Activated T-helper 1 cell treated with anti-CD3 and anti-CD28 coated beads, Interleukin-12 subunit alpha, Interleukin-12 subunit beta, Interleukin-2, Interleukin-4 antibody, amounts not matched to agents 30 ng/mL and 10 ng/mL and 1 ng/mL, durations not matched to agents 14 hours and 24 hours and 36 hours (primary cell): ENCODE measurements at regions of chr10 and their contacts with region 1.

Region 1: DNA sequence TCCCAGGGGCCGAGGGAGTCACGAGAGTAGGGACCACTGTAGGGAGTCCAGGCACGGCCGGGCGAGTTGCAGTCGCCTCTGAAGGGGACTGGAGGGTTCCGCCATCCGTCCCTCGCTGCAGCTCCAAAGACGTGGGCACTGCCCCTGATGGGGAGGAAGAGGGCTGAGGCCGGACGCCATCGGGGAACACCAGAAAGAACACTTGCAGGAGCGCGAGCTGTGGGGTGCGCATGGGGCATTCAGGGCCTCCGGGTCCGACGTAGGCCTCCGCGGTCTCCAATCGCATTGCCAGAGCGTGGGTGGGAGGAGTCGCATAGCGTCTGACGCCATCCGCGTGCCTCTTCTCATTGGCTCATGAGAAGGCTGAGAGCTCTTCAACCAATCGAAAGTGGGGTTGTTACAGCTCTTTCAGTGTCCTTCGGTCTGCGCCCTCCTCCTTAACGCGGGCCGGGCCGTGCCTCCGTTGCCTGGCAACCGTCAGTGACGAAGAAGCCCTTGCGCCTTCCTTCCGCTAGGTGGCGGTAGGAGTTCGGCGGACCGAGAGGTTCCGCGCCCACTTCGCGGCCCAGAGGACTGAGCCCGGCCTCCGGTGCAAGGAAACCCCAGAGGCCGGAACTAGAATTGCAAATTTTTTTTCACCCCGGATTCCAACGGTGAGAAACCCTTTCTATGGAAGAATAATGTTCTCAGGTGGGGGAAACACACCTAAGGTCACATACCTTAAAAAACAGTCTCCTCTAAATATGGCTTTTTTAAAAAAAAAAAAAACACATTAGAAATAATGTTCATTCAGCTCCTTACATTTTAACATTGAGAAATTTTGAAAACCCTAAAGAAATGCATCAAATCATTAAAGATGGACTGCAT is at the start of gene TCTN3:
- DNase-seq: peak; percentile 98
- H3K4me3 Mint-ChIP-seq: peak within 1 kb of the TSS; percentile 98
- H3K27ac Mint-ChIP-seq: peak within 1 kb of the TSS; percentile 95
- H3K4me1 Mint-ChIP-seq: peaks cover 48% of the 10 kb centered on the region
- H3K27me3 Mint-ChIP-seq: no peaks in the 10 kb centered on the region
- total RNA-seq, gene TCTN3: 56.3 and 58.0 TPM in 2 replicates

Region 2: DNA sequence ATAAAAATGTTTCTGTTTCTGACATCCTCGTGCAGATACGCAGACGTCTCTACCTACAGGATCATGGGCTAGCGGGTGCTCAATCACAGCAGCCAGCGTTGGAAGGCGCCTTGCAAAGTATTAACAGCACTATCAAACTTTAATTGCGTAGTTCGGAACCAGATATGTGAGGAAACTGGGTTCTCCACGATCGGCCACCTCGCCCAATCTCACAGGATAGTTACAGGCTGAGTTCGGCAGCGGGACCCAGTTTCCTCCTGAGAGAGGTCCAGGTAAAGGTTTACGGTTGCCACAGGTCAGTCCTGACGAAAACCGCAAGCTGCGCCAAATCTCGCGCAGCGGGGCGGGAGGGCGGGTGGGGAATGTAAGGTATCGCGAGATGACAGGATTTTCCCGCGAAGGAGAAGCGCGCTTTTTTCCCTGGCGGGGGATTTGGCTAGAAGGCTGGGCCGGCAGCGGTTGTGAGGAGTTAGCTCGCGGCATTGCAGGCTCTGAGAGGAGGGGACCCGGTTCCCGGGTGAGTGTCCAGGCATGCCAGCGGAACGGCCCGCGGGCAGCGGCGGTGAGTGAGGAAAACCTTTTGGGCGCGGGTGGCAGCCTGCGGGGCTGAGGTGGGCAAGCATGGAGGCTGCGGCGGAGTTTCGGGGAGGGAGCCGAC is 1148.4 kb before region 1 on chr10 and contains the start of gene HELLS:
- intact Hi-C with region 1: loop called (anchors 5 kb)
- DNase-seq: peak; percentile 69
- H3K4me3 Mint-ChIP-seq: peak within 1 kb of the TSS; percentile 99
- H3K27ac Mint-ChIP-seq: peak within 1 kb of the TSS; percentile 96
- H3K4me1 Mint-ChIP-seq: peaks cover 33% of the 10 kb centered on the region
- H3K27me3 Mint-ChIP-seq: peaks cover 13% of the 10 kb centered on the region
- total RNA-seq, gene HELLS: 224 and 228 TPM in 2 replicates

Region 3: GRCh38 chr10:95706986-95707385 is 13.1 kb after region 1 on chr10:
- intact Hi-C with region 1: no loop called
- DNase-seq: no peak
- H3K4me3 Mint-ChIP-seq: no peak overlapping the region
- H3K27ac Mint-ChIP-seq: no peak overlapping the region
- H3K4me1 Mint-ChIP-seq: peaks cover 7% of the 10 kb centered on the region
- H3K27me3 Mint-ChIP-seq: peaks cover 3% of the 10 kb centered on the region

Region 4: GRCh38 chr10:95755511-95756004 is 61.7 kb after region 1 on chr10:
- intact Hi-C with region 1: loop called (anchors 1 kb)
- DNase-seq: no peak
- H3K4me3 Mint-ChIP-seq: peak overlapping the region; percentile 85
- H3K27ac Mint-ChIP-seq: peak overlapping the region; percentile 84
- H3K4me1 Mint-ChIP-seq: peaks cover 48% of the 10 kb centered on the region
- H3K27me3 Mint-ChIP-seq: peaks cover 2% of the 10 kb centered on the region

Region 5: DNA sequence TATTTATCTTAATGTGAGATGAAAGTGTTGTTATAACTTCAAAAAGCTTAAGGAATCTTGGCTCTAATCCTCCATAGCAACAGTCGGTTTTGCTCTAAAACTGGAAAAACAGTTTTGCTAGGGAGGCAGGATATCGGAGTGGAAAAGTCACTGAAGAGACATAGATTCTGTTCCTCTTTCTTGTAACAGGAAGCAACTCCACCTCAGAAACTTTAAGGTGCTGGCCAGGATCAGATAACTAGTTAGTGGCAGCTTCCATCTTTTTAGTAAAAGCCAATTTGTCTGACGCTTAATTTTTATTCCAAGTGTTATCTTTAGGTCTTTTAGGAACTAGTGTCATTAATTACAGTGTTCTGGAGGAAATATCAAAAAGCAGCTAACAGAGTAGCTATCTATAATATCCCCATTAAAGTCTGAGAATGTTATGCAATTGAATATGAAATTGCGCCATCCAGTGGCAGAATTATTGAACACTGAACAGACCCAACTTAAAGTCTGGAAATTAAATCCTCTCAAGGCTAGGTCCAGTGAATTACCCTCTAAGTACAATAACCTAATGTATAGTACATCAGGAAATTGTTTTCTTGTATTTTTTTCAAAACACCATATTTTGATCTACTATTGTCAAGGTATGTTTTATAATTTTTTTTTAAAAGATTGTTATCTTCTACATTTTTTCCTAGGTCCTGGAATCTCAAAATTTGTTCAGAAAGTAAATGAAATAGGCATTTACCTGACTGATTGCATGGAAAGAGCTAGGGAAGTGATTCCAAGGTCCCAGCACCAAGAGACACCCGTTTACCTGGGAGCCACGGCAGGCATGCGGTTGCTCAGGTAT is 148.0 kb after region 1 on chr10:
- intact Hi-C with region 1: loop called (anchors 1 kb)
- DNase-seq: no peak
- H3K4me3 Mint-ChIP-seq: peak overlapping the region; percentile 45
- H3K27ac Mint-ChIP-seq: peak overlapping the region; percentile 81
- H3K4me1 Mint-ChIP-seq: peaks cover 75% of the 10 kb centered on the region
- H3K27me3 Mint-ChIP-seq: no peaks in the 10 kb centered on the region

Region 6: DNA sequence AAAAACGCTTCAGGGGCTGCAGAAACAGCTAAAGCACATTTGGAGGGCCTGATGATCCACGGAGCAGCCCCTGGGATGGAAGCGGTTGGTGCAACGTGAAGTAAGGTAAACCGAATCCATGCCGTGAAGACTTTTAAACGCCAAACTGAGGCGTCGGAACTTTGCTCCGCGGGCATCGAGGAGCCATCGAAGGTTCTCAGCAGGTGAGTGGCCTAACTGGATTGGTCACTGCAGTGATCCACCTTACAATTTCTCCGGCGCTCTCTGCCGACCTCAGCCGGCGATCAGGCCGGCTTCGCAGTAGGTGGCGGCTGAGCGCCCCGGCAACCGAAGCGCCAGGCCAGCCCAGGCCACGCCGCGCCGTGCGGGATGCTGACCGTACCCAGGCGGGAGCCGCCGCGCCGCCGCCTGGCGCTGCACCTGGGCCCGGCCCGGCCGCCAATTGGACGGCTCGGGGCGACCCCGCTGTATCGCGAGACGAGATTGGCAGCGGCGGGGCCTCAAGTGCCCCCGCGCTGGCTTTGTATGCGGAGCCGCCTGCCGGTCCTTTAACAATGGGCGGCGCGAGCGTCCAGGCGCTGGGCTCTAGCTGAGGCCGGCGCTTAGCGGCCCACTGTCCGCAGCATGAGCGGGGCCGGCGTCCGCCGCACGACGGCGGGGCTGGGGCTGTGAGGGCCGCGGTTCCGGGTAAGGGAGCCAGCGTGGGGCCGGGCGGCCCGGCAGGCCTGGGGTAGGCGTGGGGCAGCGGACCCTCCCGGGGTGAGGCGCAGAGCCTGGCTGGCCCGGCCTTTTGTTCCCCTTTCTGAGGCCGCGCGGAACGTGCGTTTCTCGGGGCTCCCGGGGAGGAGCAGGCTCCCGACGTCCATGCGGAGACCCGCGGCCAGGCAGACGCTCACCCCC is 349.4 kb after region 1 on chr10 and contains the start of gene CCNJ:
- intact Hi-C with region 1: loop called (anchors 1 kb)
- DNase-seq: peak; percentile 79
- H3K4me3 Mint-ChIP-seq: peak within 1 kb of the TSS; percentile 92
- H3K27ac Mint-ChIP-seq: peak within 1 kb of the TSS; percentile 83
- H3K4me1 Mint-ChIP-seq: peaks cover 42% of the 10 kb centered on the region
- H3K27me3 Mint-ChIP-seq: peaks cover 2% of the 10 kb centered on the region
- total RNA-seq, gene CCNJ: 9.7 and 10.2 TPM in 2 replicates

Region 7: DNA sequence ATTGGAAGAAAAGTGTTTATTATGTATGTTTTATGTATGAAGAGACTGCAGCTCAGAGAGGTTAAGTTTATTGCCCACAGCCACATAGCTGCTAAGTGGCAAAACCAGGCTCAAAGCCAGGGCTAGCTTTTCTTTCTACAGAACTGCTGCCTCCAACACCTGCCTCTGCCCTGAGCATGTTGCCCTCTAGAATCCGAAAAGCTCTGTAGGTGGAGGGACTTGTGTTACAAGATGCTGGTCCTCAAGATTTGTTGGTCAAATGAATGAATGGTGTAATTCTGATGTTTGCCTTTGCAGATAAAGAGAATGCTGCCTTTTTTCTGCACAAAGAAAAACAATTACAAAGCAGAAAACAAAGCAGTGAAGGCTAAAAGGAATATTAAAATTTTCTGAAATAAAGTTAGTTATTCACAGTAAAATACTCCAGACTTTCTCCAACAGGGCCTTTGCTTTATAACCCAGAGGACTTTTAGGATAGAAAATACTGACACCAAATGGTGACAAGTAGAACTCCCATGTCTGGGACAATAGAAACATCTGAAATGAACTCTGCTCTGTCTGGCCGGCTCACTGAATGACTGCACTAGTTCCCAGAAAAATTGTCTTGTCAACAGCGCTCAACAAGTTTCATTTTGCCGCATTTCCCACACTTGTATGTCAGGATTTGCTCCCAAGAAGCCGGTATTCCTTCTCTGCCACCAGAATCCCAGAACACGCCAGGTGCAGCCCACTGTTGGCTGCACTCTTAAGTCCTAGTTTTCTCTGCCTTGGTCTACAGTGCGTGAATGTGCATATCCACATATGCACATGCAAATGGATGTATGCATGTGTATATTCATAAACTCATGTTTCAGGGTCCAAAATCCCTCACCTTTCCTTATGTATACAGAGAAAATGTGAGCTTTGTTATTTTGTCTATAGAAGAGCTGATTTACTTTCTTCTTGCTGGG is 599.3 kb after region 1 on chr10:
- intact Hi-C with region 1: loop called (anchors 2 kb)
- DNase-seq: no peak
- H3K4me3 Mint-ChIP-seq: no peak overlapping the region
- H3K27ac Mint-ChIP-seq: no peak overlapping the region
- H3K4me1 Mint-ChIP-seq: peaks cover 14% of the 10 kb centered on the region
- H3K27me3 Mint-ChIP-seq: peaks cover 5% of the 10 kb centered on the region